HepG2 (cell line): ENCODE measurements at regions of chr9 and their contacts with region 1.

Region 1: DNA sequence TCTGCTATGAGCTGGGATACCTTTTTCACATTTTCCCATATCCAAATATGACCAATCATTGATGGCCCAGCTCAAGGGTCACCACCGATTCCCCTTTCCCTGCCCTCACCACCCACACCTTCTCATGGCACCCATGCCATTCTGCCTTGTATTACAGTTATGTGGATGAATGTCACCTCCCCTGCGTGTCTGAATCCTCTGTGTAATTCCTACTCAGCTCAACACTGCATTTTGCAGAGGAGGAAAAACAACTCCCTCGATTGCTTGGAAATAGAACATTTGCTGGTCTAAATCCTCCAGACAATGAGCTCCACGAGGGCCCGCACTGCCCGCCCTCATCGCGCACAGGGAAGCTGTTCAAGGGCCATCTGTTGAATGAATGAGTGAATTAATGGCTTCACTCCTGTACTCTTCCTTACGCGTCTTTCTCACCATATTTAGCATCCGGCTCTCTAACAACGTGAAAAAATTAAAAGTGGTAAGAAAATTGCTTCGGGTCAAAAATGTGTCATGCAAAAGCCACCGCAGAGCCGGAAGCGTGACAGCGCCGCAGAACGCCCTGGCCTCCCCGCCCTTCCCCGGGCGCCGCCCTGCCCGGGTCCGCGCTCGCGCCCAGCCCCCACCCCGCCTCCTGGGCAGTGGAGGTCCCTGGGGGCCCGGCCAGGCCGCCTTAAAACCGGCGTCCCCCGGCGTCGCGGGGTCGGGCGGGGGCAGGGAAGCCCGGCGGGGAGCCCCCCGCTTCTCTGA is 706 bp downstream of the SUSD1 start:
- DNase-seq: peak; percentile 44
- ATAC-seq: peak; percentile 79
- H3K4me3 ChIP-seq: peak overlapping the region; percentile 62 to 91 (median 89)
- H3K27ac ChIP-seq: peak overlapping the region; percentile 72
- H3K4me1 ChIP-seq: peaks cover 88% of the 10 kb centered on the region
- H3K27me3 ChIP-seq: no peaks in the 10 kb centered on the region; a peak in 1 of 5 replicates
- CTCF ChIP-seq: no peak
- EP300 ChIP-seq: no peak
- POLR2A ChIP-seq: no peak; a peak in 2 of 4 replicates
- RAD21 ChIP-seq: no peak; the same call in 1 of the 2 replicates

Region 2: GRCh38 chr9:112119225-112120029 is 55.0 kb before region 1 on chr9:
- CTCF ChIA-PET with region 1: no interaction called
- POLR2A ChIA-PET with region 1: interaction called, 11 read pairs
- in situ Hi-C with region 1: no loop called
- intact Hi-C with region 1: loop called (anchors 5 kb)
- DNase-seq: peak; percentile 99
- ATAC-seq: peak; percentile 97
- H3K4me3 ChIP-seq: peak overlapping the region in 1 of 3 experiments; percentile 60; a peak in 2 of 6 replicates
- H3K27ac ChIP-seq: peak overlapping the region; percentile 96
- H3K4me1 ChIP-seq: peaks cover 64% of the 10 kb centered on the region
- H3K27me3 ChIP-seq: no peaks in the 10 kb centered on the region
- CTCF ChIP-seq: no peak
- EP300 ChIP-seq: peak; percentile 14 to 96; a peak in 3 of 4 replicates
- POLR2A ChIP-seq: peak; percentile 67 to 69; a peak in 3 of 4 replicates
- RAD21 ChIP-seq: no peak

Region 3: DNA sequence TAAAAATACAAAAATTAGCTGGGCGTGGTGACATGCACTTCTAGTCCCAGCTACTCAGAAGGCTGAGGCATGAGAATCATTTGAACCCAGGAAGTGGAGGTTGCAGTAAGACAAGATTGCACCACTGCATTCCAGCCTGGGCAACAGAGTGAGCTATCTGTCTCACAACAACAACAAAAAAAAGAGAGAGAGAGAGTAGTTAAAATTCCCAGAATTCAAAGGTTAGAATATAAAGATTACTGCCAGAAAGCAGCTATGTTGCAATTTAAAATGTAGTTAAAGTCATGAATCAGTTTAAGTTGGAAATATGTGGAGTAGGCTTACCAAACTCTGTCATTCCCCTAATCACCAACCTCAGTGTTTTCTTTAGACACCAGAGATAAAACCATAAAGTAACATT is 59.4 kb after region 1 on chr9:
- CTCF ChIA-PET with region 1: no interaction called
- POLR2A ChIA-PET with region 1: no interaction called
- in situ Hi-C with region 1: no loop called
- intact Hi-C with region 1: loop called (anchors 5 kb)
- DNase-seq: peak; percentile 18
- ATAC-seq: no peak
- H3K4me3 ChIP-seq: no peak overlapping the region
- H3K27ac ChIP-seq: no peak overlapping the region
- H3K4me1 ChIP-seq: peaks cover 14% of the 10 kb centered on the region
- H3K27me3 ChIP-seq: no peaks in the 10 kb centered on the region
- CTCF ChIP-seq: no peak
- EP300 ChIP-seq: no peak
- POLR2A ChIP-seq: no peak
- RAD21 ChIP-seq: no peak